Left colon (tissue), 2 donors: ENCODE measurements at regions of chr7 and their contacts with region 1.

Region 1: GRCh38 chr7:100852048-100852872 is at the start of gene SLC12A9:
- DNase-seq: peak; percentile 92 to 96
- ATAC-seq: peak; percentile 98
- total RNA-seq, gene SLC12A9: 31.0 to 33.6 TPM

Region 2: DNA sequence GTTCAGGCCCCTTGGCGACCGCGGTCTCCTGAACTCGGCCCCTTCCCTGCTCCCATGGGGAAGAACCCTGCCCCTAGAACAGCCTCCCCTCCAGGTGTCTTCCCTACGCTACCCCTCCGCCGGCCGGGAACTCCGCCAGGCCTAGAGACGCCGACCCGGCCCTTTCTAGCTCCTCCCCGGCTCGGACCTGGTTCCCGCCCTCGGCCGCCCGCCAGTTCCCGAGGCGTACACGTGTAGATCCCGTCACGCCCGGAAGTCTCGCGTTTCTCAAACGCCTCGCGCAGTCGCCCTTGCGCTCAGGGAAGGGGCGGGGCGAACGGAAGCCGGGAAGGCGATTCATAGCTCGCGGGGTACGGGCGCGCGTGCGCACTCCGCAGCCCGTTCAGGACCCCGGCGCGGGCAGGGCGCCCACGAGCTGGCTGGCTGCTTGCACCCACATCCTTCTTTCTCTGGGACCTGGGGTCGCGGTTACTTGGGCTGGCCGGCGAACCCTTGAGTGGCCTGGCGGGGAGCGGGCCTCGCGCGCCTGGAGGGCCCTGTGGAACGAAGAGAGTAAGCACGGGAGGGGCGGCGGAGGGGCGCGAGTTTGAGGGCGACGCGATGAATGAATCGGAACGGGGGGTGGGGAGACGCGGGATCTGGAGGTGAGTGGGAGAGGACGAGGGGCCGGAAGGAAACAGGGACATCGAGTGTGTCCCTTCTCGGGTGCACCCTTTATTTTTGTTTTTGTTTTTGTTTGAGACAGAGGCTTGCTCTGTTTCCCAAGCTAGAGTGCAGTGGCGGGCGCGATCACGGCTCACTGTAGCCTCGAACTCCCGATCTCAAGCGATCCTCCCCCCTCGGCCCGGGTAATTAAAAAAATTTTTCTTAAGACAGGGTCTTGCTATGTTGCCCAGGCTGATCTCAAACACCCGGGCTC is 146.2 kb before region 1 on chr7 and contains the start of gene POP7:
- intact Hi-C with region 1: loop called in 1 of 2 experiments (anchors 5 kb)
- DNase-seq: peak; percentile 98 to 100
- ATAC-seq: peak; percentile 96
- total RNA-seq, gene POP7: 21.5 to 25.0 TPM

Region 3: GRCh38 chr7:100799014-100799896 is 53.0 kb before region 1 on chr7:
- intact Hi-C with region 1: loop called in 1 of 2 experiments (anchors 2 kb)
- DNase-seq: peak; percentile 65 to 78
- ATAC-seq: peak; percentile 47

Region 4: DNA sequence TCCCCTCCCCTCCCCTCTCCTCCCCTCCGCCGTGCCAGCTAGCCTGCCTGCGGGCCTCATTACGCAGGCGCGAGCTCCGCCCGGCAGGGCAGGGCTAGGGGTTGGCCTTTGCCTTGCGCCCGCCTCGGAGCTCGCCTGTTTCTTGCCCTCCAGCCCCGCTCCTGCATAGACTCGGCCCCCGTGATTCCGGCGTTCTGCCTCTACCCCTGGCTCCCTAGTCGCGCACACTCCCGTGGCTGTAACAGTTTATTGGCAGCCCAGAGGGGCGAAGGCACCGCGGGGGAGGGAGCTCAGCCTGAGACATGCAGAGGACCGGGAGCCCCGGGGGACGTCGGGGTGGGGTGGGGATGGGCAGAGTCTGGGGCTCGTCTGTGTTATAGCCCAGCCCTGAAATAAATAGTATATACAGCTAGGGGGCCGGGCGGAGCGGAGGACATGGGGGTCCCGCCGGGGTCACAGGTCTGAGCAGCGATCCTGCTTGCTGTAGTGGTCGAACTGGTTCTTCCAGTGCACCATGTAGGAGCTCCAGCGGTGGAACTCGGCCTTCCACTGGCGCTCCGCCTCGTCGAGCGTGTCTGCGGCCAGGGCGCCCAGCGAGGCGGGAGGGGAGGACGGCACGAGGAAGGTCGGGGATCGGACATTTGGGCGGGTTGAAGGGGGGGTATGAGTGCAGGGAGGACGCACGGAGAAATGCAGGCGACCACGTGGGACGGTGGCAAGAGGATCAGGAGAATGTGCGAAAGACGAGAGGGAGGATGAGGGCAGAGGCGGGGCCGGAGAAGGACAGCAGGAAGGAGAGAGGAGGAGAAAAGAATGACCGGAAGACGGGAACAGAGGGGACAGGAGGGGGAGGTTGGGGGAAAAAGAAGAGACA is 37.7 kb after region 1 on chr7:
- intact Hi-C with region 1: no loop called
- DNase-seq: peak; percentile 94
- ATAC-seq: peak; percentile 83